B cell (primary cell): ENCODE measurements at regions of chr4 and their contacts with region 1.

Region 1: GRCh38 chr4:48269861-48270522 is 354 bp upstream of the TEC start:
- DNase-seq: peak; percentile 94
- ATAC-seq: peak; percentile 91
- H3K4me3 ChIP-seq: peak overlapping the region in 4 of 5 experiments; percentile 72 to 98 (median 85)
- H3K4me3 Mint-ChIP-seq: peak overlapping the region; percentile 99
- H3K27ac ChIP-seq: peak overlapping the region; percentile 77 to 79
- H3K27ac Mint-ChIP-seq: peak overlapping the region; percentile 98
- H3K4me1 ChIP-seq: peaks cover 11 to 16% of the 10 kb centered on the region in 2 donors
- H3K4me1 Mint-ChIP-seq: peaks cover 29% of the 10 kb centered on the region
- H3K27me3 ChIP-seq: no peaks in the 10 kb centered on the region
- H3K27me3 Mint-ChIP-seq: no peaks in the 10 kb centered on the region
- CTCF ChIP-seq: peak; percentile 23

Region 2: GRCh38 chr4:47914220-47914925 is 355.6 kb before region 1 on chr4 and contains the start of gene NFXL1:
- CTCF ChIA-PET with region 1: no interaction called
- POLR2A ChIA-PET with region 1: no interaction called
- intact Hi-C with region 1: loop called (anchors 1 kb)
- DNase-seq: peak; percentile 95
- ATAC-seq: peak; percentile 94
- H3K4me3 ChIP-seq: peak within 1 kb of the TSS; percentile 85 to 100 (median 99)
- H3K4me3 Mint-ChIP-seq: peak within 1 kb of the TSS; percentile 99
- H3K27ac ChIP-seq: peak within 1 kb of the TSS; percentile 48 to 75
- H3K27ac Mint-ChIP-seq: peak within 1 kb of the TSS; percentile 97
- H3K4me1 ChIP-seq: peaks cover 14 to 17% of the 10 kb centered on the region in 2 donors
- H3K4me1 Mint-ChIP-seq: peaks cover 27% of the 10 kb centered on the region
- H3K27me3 ChIP-seq: no peaks in the 10 kb centered on the region
- H3K27me3 Mint-ChIP-seq: no peaks in the 10 kb centered on the region
- CTCF ChIP-seq: no peak
- total RNA-seq, gene NFXL1: 16.5 and 16.6 TPM in 2 replicates

Region 3: DNA sequence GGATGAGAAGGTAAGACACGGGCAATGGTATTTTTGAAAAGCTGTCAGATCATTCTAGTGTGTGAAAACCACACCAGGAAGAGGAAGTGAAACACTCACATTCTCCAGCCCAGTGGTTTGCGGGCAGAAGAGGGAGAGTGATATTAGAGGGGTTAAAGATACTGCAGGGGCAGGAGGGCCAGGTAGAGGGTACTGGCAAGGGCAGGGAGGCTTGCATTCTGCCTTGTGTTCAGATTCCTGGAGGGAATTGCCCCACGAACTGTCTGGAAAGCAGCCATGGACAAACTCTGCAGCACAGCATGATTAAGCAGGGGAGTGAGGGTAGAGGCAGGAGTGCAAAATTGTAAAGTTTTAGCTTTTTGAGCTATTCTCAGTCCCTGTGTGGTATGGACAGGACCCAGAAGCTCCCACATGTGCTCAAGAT is 222.6 kb before region 1 on chr4:
- CTCF ChIA-PET with region 1: no interaction called
- POLR2A ChIA-PET with region 1: no interaction called
- intact Hi-C with region 1: loop called (anchors 1 kb)
- DNase-seq: peak; percentile 87
- ATAC-seq: peak; percentile 95
- H3K4me3 ChIP-seq: peak overlapping the region in 2 of 5 experiments; percentile 8 to 31
- H3K4me3 Mint-ChIP-seq: peak overlapping the region; percentile 57
- H3K27ac ChIP-seq: no peak overlapping the region
- H3K27ac Mint-ChIP-seq: peak overlapping the region; percentile 17
- H3K4me1 ChIP-seq: peaks cover 58 to 60% of the 10 kb centered on the region in 2 donors
- H3K4me1 Mint-ChIP-seq: peaks cover 59% of the 10 kb centered on the region
- H3K27me3 ChIP-seq: peaks cover 0 to 41% (median 19%) of the 10 kb centered on the region in 4 experiments
- H3K27me3 Mint-ChIP-seq: peaks cover 49% of the 10 kb centered on the region
- CTCF ChIP-seq: no peak

Region 4: DNA sequence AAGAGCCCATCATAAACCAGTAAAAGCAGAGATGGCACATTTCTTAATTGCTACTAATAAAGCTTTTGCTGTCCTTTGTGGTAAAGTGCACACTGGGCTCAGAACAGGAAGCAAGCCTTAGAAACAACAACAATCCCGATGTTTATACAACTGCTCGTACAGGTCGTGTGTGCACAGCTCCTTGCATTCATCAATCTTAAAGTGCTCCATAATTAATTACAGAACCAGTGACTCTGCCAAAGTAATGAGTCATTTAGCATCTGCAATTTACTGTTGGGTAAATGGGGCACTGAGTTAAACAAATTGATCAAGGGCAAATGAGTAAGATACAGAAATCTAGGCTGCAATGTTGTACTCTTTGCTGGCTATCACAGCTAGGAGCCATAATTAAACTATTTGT is 74.6 kb before region 1 on chr4:
- CTCF ChIA-PET with region 1: interaction called, 3 read pairs
- POLR2A ChIA-PET with region 1: interaction called, 3 read pairs
- intact Hi-C with region 1: loop called (anchors 5 kb)
- DNase-seq: no peak
- ATAC-seq: peak; percentile 12
- H3K4me3 ChIP-seq: peak overlapping the region in 1 of 5 experiments; percentile 38
- H3K4me3 Mint-ChIP-seq: peak overlapping the region; percentile 78
- H3K27ac ChIP-seq: peak overlapping the region; percentile 25 to 53
- H3K27ac Mint-ChIP-seq: peak overlapping the region; percentile 62
- H3K4me1 ChIP-seq: peaks cover 39 to 66% of the 10 kb centered on the region in 2 donors
- H3K4me1 Mint-ChIP-seq: peaks cover 74% of the 10 kb centered on the region
- H3K27me3 ChIP-seq: no peaks in the 10 kb centered on the region
- H3K27me3 Mint-ChIP-seq: no peaks in the 10 kb centered on the region
- CTCF ChIP-seq: no peak

Region 5: GRCh38 chr4:48340965-48341775 is 71.2 kb after region 1 on chr4 and contains the start of gene SLAIN2:
- CTCF ChIA-PET with region 1: no interaction called
- POLR2A ChIA-PET with region 1: no interaction called
- intact Hi-C with region 1: loop called (anchors 1 kb)
- DNase-seq: peak; percentile 98
- ATAC-seq: peak; percentile 88
- H3K4me3 ChIP-seq: peak within 1 kb of the TSS; percentile 79 to 96 (median 83)
- H3K4me3 Mint-ChIP-seq: peak within 1 kb of the TSS; percentile 96
- H3K27ac ChIP-seq: peak within 1 kb of the TSS; percentile 93 to 94
- H3K27ac Mint-ChIP-seq: peak within 1 kb of the TSS; percentile 98
- H3K4me1 ChIP-seq: peaks cover 23 to 28% of the 10 kb centered on the region in 2 donors
- H3K4me1 Mint-ChIP-seq: peaks cover 43% of the 10 kb centered on the region
- H3K27me3 ChIP-seq: no peaks in the 10 kb centered on the region
- H3K27me3 Mint-ChIP-seq: no peaks in the 10 kb centered on the region
- CTCF ChIP-seq: peak; percentile 60
- total RNA-seq, gene SLAIN2: 69.1 and 69.2 TPM in 2 replicates